Psoas muscle (tissue), 8 donors: ENCODE measurements at regions of chr16 and their contacts with region 1.

Region 1: GRCh38 chr16:969508-970378 is 1.0 kb downstream of the LMF1 start:
- DNase-seq: peak; percentile 48 to 76
- ATAC-seq: peak in 3 of 4 donors; percentile 6 to 32 (median 15)
- H3K4me3 ChIP-seq: peak overlapping the region; percentile 96
- H3K27ac ChIP-seq: peak overlapping the region; percentile 86
- H3K4me1 ChIP-seq: peaks cover 12% of the 10 kb centered on the region
- H3K27me3 ChIP-seq: peaks cover 0 to 25% (median 6%) of the 10 kb centered on the region in 3 donors
- CTCF ChIP-seq: no peak

Region 2: GRCh38 chr16:660459-661183 is 309.1 kb before region 1 on chr16:
- intact Hi-C with region 1: no loop called
- DNase-seq: peak; percentile 93 to 96
- ATAC-seq: peak; percentile 85 to 93 (median 88)
- H3K4me3 ChIP-seq: peak overlapping the region; percentile 46
- H3K27ac ChIP-seq: peak overlapping the region; percentile 68
- H3K4me1 ChIP-seq: peaks cover 11% of the 10 kb centered on the region
- H3K27me3 ChIP-seq: no peaks in the 10 kb centered on the region
- CTCF ChIP-seq: peak; percentile 47

Region 3: DNA sequence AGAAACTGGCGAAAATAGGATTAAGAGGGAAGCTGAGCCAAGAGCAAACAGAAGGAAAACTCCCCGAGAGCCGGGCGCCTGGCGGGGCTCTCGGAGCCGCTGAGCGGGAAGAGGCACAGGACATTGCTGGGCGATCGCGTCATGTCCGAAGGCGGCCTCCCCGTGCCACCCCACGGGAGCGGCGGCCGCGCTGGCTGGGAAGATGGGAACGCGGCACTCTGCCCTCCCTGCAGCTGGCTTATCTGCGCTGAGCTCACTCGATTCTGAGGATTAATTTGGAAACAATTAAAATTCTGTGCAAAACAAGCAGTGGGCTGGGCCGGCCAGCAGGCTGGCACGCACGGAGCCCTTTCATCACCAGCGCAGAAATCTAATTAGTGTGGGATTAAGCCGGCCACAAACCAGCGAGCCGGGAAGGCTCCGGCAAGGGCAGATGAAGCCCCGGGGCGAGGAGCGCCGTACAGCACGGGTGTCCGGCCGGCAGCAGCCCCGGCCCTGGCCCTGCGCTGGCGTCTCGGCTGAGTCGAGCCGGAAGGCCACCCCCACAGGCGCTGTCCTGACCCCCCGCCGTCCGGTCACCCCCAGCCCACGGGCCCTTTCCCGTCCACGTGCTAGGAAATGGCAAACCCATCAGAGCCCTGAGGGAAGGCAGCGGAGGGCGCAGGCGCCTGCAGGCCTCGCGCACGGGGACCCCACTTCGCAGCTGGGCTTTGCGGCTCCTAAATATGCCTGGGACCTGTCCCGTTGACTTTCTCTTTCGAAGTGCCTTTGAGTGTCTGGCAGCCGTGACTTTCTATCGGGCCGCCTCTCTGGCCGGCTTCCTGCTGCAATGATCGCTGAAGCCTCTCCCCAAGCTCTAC is 49.7 kb after region 1 on chr16:
- intact Hi-C with region 1: loop called in 1 of 2 experiments (anchors 10 kb)
- DNase-seq: peak in 1 of 2 donors; percentile 62
- ATAC-seq: peak; percentile 83 to 94 (median 91)
- H3K4me3 ChIP-seq: peak overlapping the region; percentile 33
- H3K27ac ChIP-seq: no peak overlapping the region
- H3K4me1 ChIP-seq: peaks cover 5% of the 10 kb centered on the region
- H3K27me3 ChIP-seq: peaks cover 0 to 72% (median 26%) of the 10 kb centered on the region in 3 donors
- CTCF ChIP-seq: no peak